CD8-positive, alpha-beta T cell (primary cell): ENCODE measurements at regions of chr16 and their contacts with region 1.

Region 1: GRCh38 chr16:46929378-46930332 is 43.8 kb downstream of the DNAJA2 start:
- DNase-seq: peak; percentile 16 to 71 (median 54)
- ATAC-seq: peak; percentile 51
- H3K4me3 ChIP-seq: no peak overlapping the region
- H3K4me3 Mint-ChIP-seq: no peak overlapping the region
- H3K27ac ChIP-seq: no peak overlapping the region
- H3K27ac Mint-ChIP-seq: no peak overlapping the region
- H3K4me1 ChIP-seq: no peaks in the 10 kb centered on the region
- H3K4me1 Mint-ChIP-seq: no peaks in the 10 kb centered on the region
- H3K27me3 ChIP-seq: no peaks in the 10 kb centered on the region
- H3K27me3 Mint-ChIP-seq: peaks cover 2% of the 10 kb centered on the region
- CTCF ChIP-seq: peak; percentile 84

Region 2: GRCh38 chr16:46918861-46919792 is 10.5 kb before region 1 on chr16:
- CTCF ChIA-PET with region 1: interaction called, 14 read pairs
- POLR2A ChIA-PET with region 1: no interaction called
- intact Hi-C with region 1: no loop called
- DNase-seq: no peak
- ATAC-seq: no peak
- H3K4me3 ChIP-seq: no peak overlapping the region
- H3K4me3 Mint-ChIP-seq: no peak overlapping the region
- H3K27ac ChIP-seq: no peak overlapping the region
- H3K27ac Mint-ChIP-seq: no peak overlapping the region
- H3K4me1 ChIP-seq: no peaks in the 10 kb centered on the region
- H3K4me1 Mint-ChIP-seq: no peaks in the 10 kb centered on the region
- H3K27me3 ChIP-seq: peaks cover 0 to 4% of the 10 kb centered on the region in 2 experiments
- H3K27me3 Mint-ChIP-seq: no peaks in the 10 kb centered on the region
- CTCF ChIP-seq: no peak